HepG2 (cell line): ENCODE measurements at regions of chr20 and their contacts with region 1.

Region 1: GRCh38 chr20:59087829-59088433 is 45.3 kb upstream of the PRELID3B start:
- DNase-seq: peak; percentile 70
- ATAC-seq: peak; percentile 96
- H3K4me3 ChIP-seq: no peak overlapping the region
- H3K27ac ChIP-seq: no peak overlapping the region
- H3K4me1 ChIP-seq: no peaks in the 10 kb centered on the region
- H3K27me3 ChIP-seq: peaks cover 5 to 28% of the 10 kb centered on the region in 2 experiments; a peak in 3 of 5 replicates
- CTCF ChIP-seq: peak; percentile 84
- EP300 ChIP-seq: no peak
- POLR2A ChIP-seq: no peak
- RAD21 ChIP-seq: peak; percentile 72; the same call in 1 of the 2 replicates

Region 2: GRCh38 chr20:58963064-58963584 is 124.8 kb before region 1 on chr20:
- CTCF ChIA-PET with region 1: no interaction called
- POLR2A ChIA-PET with region 1: no interaction called
- in situ Hi-C with region 1: no loop called
- intact Hi-C with region 1: loop called (anchors 10 kb)
- DNase-seq: no peak
- ATAC-seq: peak; percentile 47; the same call in 2 of the 3 replicates
- H3K4me3 ChIP-seq: no peak overlapping the region
- H3K27ac ChIP-seq: no peak overlapping the region
- H3K4me1 ChIP-seq: peaks cover 15% of the 10 kb centered on the region
- H3K27me3 ChIP-seq: peaks cover 7 to 49% of the 10 kb centered on the region in 2 experiments
- CTCF ChIP-seq: no peak
- EP300 ChIP-seq: no peak
- POLR2A ChIP-seq: no peak
- RAD21 ChIP-seq: no peak

Region 3: DNA sequence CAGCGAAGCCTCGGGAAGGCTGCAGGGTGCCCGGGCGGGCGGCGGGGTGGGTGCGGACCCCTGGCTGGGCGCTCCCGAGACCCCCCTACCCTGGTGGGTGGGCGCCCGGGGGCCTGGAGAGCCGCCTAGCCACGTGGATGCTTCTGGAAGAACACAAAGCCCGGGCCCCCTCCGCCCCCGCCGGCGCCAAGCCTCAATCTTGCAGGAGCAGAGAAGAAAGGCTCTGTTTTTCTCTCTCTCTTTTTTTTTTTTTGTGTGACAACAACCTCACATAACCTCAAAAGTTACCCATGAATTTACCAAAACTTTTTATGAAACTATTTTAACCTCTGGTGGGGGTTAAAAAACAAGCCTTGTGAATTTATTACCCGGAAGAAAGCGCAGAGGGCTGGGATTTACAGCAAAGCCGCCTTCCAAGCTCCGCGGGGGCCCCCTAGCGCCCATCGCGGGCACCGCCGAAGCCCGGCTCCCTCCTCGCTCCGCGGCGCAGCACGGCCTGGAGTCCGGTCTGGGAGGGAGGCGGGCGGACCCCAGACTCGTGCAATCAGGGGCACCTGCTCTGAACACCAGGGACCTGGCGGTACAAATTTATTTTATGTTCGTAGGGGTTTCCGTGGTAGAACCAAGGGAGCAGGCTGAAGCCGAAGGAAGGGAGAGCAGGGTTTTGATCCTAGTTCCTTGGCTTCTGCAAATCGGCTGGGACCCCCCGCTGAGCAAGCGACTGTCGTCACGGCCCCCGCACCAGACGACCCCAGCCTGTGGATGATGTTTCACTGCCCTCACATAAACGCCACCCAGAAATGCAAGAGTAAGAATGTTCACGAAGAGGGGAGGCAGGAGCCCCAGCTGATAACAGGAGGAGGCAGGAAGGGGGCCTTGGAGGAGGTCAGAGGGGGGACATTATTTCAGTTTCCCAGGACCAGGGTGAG is 134.6 kb after region 1 on chr20:
- CTCF ChIA-PET with region 1: interaction called, 20 read pairs
- POLR2A ChIA-PET with region 1: no interaction called
- in situ Hi-C with region 1: loop called (anchors 5 kb)
- intact Hi-C with region 1: loop called (anchors 1 kb)
- DNase-seq: peak; percentile 55
- ATAC-seq: peak; percentile 98
- H3K4me3 ChIP-seq: peak overlapping the region; percentile 20 to 51 (median 46); a peak in 4 of 6 replicates
- H3K27ac ChIP-seq: no peak overlapping the region
- H3K4me1 ChIP-seq: peaks cover 6% of the 10 kb centered on the region; the same call in 1 of the 2 replicates
- H3K27me3 ChIP-seq: peaks cover 13 to 68% of the 10 kb centered on the region in 2 experiments
- CTCF ChIP-seq: peak; percentile 95
- EP300 ChIP-seq: no peak
- POLR2A ChIP-seq: no peak
- RAD21 ChIP-seq: peak; percentile 93

Region 4: GRCh38 chr20:59403261-59403961 is 315.5 kb after region 1 on chr20:
- CTCF ChIA-PET with region 1: interaction called, 15 read pairs
- POLR2A ChIA-PET with region 1: no interaction called
- in situ Hi-C with region 1: loop called (anchors 5 kb)
- intact Hi-C with region 1: loop called (anchors 1 kb)
- DNase-seq: no peak
- ATAC-seq: peak; percentile 88
- H3K4me3 ChIP-seq: no peak overlapping the region; a peak in 1 of 6 replicates
- H3K27ac ChIP-seq: no peak overlapping the region
- H3K4me1 ChIP-seq: no peaks in the 10 kb centered on the region
- H3K27me3 ChIP-seq: peaks cover 25 to 97% of the 10 kb centered on the region in 2 experiments
- CTCF ChIP-seq: peak; percentile 96
- EP300 ChIP-seq: no peak
- POLR2A ChIP-seq: no peak
- RAD21 ChIP-seq: peak; percentile 97

Region 5: DNA sequence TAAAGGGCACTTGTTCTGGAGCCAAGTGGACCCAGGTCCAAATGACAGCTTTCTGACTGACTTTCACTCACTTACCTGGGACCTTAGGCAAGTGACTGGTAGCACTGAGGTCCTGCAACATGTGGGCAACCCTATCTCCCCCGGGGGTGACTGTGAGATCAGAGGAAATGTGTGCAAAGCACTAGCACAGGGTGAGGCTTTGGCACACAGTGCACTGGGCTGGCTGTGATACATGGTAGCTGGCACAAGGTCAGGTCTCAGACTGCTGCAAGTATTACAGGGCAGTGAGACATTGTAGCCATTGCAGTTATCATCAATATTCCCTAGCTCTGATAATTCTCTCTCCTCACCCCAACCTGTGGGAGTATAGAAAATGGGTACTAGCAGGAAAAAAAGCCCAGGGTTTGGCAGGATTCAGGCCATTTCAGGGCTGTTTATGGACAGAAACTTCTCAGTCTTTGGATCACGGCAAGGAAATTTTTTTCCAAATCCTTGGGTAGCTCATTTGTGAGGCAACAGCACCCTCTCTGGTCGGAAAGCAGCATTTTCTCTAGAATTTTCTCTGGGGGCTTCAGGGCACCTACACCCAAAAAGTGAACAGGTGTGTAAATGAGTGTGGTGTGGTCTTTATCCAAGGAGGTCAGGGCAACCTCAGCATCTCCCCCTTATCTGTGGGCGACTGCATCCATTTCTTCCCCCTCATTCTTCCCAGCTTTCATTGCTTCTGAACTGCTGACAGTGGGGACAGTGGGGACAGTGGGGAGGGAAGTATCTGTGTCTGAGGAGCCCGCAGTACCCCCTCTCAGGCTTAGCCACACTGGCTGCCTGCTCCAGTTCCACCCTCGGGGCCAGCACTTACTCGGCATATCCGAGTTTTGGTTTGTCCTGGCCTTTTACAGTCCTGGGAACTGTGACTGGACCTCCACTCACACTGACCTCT is 367.7 kb after region 1 on chr20:
- CTCF ChIA-PET with region 1: interaction called, 10 read pairs
- POLR2A ChIA-PET with region 1: no interaction called
- in situ Hi-C with region 1: no loop called
- intact Hi-C with region 1: loop called (anchors 1 kb)
- DNase-seq: no peak
- ATAC-seq: peak; percentile 48
- H3K4me3 ChIP-seq: no peak overlapping the region
- H3K27ac ChIP-seq: no peak overlapping the region
- H3K4me1 ChIP-seq: no peaks in the 10 kb centered on the region
- H3K27me3 ChIP-seq: peaks cover 7 to 59% of the 10 kb centered on the region in 2 experiments; a peak in 4 of 5 replicates
- CTCF ChIP-seq: peak; percentile 55
- EP300 ChIP-seq: no peak
- POLR2A ChIP-seq: no peak
- RAD21 ChIP-seq: peak; percentile 43; the same call in 1 of the 2 replicates

Region 6: GRCh38 chr20:59994697-59995122 is 906.8 kb after region 1 on chr20:
- CTCF ChIA-PET with region 1: no interaction called
- POLR2A ChIA-PET with region 1: no interaction called
- in situ Hi-C with region 1: no loop called
- intact Hi-C with region 1: no loop called
- DNase-seq: no peak
- ATAC-seq: no peak
- H3K4me3 ChIP-seq: no peak overlapping the region
- H3K27ac ChIP-seq: no peak overlapping the region
- H3K4me1 ChIP-seq: no peaks in the 10 kb centered on the region
- H3K27me3 ChIP-seq: no peaks in the 10 kb centered on the region
- CTCF ChIP-seq: no peak
- EP300 ChIP-seq: no peak
- POLR2A ChIP-seq: no peak
- RAD21 ChIP-seq: no peak